Caco-2 (cell line): ENCODE measurements at regions of chr4 and their contacts with region 1.

Region 1: DNA sequence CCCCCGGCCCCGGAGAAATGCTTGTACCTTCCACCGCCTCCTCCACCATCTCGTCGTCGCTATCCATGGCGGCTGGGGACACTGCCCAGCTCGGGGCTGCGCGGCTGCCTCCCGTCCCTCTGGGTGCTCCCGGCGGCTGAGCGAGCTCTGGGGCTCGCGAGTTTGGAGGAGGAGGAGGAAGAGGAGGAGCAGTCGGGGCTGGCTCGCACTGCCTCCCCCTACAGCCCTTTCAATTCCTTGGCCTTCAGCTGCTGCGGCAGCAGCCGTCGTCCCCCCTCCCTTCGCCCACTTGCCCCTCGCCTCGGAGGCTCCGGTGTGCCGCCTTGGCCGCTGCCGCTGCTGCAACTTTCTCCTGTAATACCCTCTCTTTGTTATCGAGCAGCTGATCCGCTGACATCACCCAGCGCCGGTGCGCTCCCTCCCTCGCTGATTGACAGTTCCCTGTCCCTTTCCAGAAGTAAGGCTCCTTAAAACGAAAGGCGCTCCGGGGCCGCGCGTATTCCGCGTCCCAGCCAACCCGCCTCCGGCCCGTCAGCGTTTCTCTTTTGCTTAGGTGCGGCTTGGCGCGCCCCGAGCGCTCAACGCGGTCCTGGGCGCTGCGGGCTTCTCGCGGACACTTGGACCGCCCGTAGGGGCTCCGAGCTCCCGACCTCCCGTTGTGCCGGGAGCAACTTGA is at the start of gene SETD7:
- DNase-seq: peak; percentile 75 to 78
- H3K4me3 ChIP-seq: peak within 1 kb of the TSS; percentile 67
- H3K4me3 Mint-ChIP-seq: peak within 1 kb of the TSS; percentile 100
- H3K27ac Mint-ChIP-seq: peak within 1 kb of the TSS; percentile 98
- H3K4me1 ChIP-seq: peaks cover 9% of the 10 kb centered on the region
- H3K4me1 Mint-ChIP-seq: peaks cover 18% of the 10 kb centered on the region
- H3K27me3 ChIP-seq: no peaks in the 10 kb centered on the region; the same call in 1 of the 2 replicates
- H3K27me3 Mint-ChIP-seq: no peaks in the 10 kb centered on the region
- CTCF ChIP-seq: no peak
- total RNA-seq, gene SETD7: 29.4 and 32.2 TPM in 2 replicates

Region 2: DNA sequence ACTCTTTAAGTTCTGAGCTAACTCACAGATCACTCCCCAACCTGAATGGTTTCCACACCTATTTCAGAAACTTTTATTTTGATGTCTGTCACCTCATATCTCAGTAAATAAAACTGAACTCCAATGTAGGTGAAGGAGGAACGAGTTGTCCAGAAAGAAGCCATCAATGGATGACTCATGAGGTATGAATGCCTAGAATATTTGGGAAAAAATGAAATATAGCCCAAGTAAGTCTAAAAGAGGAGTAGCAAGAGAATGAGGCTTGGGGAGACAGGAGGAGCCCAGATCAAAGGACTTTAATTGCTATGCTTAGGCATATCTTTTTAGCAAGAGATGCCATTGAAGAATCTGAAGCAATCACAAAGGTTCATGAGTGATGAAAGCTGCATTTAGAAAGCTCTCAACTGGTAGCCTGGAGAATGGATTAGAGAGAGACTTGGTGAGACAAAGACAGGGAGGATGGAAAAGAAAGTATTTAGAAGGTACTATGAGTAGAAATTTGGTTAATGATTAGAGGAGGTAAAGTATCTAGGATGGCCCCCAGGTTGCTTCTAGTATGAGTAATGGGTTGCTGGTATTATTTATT is 501.3 kb before region 1 on chr4:
- CTCF ChIA-PET with region 1: no interaction called
- POLR2A ChIA-PET with region 1: no interaction called
- intact Hi-C with region 1: no loop called
- DNase-seq: peak in 1 of 2 experiments; percentile 14
- H3K4me3 ChIP-seq: no peak overlapping the region
- H3K4me3 Mint-ChIP-seq: peak overlapping the region; percentile 3
- H3K27ac Mint-ChIP-seq: peak overlapping the region; percentile 13
- H3K4me1 ChIP-seq: peaks cover 21% of the 10 kb centered on the region
- H3K4me1 Mint-ChIP-seq: peaks cover 21% of the 10 kb centered on the region
- H3K27me3 ChIP-seq: no peaks in the 10 kb centered on the region
- H3K27me3 Mint-ChIP-seq: no peaks in the 10 kb centered on the region
- CTCF ChIP-seq: no peak

Region 3: GRCh38 chr4:139576219-139576618 is 20.0 kb after region 1 on chr4:
- CTCF ChIA-PET with region 1: no interaction called
- POLR2A ChIA-PET with region 1: interaction called, 3 read pairs
- intact Hi-C with region 1: loop called (anchors 1 kb)
- DNase-seq: no peak
- H3K4me3 ChIP-seq: no peak overlapping the region
- H3K4me3 Mint-ChIP-seq: no peak overlapping the region
- H3K27ac Mint-ChIP-seq: no peak overlapping the region
- H3K4me1 ChIP-seq: peaks cover 12% of the 10 kb centered on the region; the same call in 1 of the 2 replicates
- H3K4me1 Mint-ChIP-seq: peaks cover 16% of the 10 kb centered on the region
- H3K27me3 ChIP-seq: no peaks in the 10 kb centered on the region
- H3K27me3 Mint-ChIP-seq: no peaks in the 10 kb centered on the region
- CTCF ChIP-seq: no peak

Region 4: DNA sequence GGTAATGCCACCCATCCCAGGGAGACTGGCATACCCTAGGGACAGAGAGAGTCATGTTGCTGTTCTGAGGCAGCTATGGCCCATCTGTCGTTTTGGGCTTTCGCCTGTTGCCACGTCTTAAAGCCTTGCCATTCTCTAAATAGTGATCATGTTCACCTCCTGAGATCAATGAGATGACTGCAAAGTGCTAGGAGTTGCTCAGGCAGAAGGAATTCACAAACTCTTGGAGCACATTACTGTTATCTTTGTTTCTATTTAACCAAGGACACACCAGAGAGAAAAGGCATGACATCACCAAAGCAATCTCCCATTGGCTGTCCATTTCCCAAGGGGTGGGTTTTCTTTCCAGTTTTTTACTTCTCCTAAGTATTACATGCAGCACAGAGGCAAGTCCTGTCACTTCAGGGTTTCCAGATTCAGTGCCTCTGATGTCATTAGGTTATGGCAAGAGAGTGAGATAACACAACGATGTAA is 36.9 kb after region 1 on chr4:
- CTCF ChIA-PET with region 1: no interaction called
- POLR2A ChIA-PET with region 1: no interaction called
- intact Hi-C with region 1: loop called (anchors 2 kb)
- DNase-seq: peak; percentile 62 to 68
- H3K4me3 ChIP-seq: no peak overlapping the region
- H3K4me3 Mint-ChIP-seq: peak overlapping the region; percentile 39
- H3K27ac Mint-ChIP-seq: peak overlapping the region; percentile 83
- H3K4me1 ChIP-seq: peaks cover 17% of the 10 kb centered on the region; the same call in 1 of the 2 replicates
- H3K4me1 Mint-ChIP-seq: peaks cover 29% of the 10 kb centered on the region
- H3K27me3 ChIP-seq: no peaks in the 10 kb centered on the region
- H3K27me3 Mint-ChIP-seq: no peaks in the 10 kb centered on the region
- CTCF ChIP-seq: no peak